GM12878 (cell line): ENCODE measurements at regions of chr2 and their contacts with region 1.

Region 1: DNA sequence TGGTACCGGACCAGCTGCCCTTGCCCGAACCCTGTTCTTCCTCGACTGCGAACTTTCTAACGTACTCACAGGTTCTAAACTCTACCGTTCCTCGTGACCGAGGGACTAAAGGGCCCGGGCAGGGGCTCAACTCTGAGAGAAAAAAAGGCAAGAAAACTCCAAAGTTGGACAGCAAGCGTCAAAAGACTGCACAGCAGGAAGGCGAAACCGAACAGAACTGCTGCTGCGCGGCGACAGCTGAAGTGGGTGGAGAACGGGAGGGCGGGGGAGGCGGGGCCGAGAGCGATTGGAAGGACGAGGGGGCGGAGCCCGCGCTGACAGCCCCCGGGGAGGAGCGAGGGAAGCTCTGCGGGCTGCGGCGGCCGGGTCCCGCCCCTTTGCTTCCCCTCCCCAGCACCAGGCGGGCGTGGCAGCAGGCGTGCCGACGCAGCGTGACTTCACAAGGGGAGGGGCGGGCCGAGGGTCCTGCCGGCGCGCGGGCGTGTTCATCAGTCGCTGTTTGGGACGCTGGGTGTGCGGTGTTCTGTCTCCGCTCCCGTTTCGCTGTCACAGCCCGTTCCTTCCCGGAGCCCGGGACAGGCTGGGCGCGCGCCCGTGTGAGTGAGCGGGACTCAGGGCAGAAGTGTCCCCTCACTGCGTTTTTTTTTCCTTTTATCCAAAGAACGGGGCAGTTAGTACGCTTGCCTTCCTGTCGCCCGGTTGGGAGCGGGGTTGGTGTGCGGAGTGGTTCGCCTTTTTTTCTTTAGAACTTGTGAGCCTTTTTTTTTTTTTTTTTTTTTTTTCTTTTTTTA is at the start of gene NABP1:
- DNase-seq: peak; percentile 84
- ATAC-seq: peak; percentile 81
- H3K4me3 ChIP-seq: peak within 1 kb of the TSS; percentile 87
- H3K27ac ChIP-seq: peak within 1 kb of the TSS; percentile 89
- H3K4me1 ChIP-seq: peaks cover 24% of the 10 kb centered on the region
- H3K27me3 ChIP-seq: no peaks in the 10 kb centered on the region
- CTCF ChIP-seq: no peak
- EP300 ChIP-seq: 0 out of 4 replicates have a peak, but pooled peaks of 1 of the 2 experiments have one; percentile 13
- POLR2A ChIP-seq: peak; percentile 98
- RAD21 ChIP-seq: 0 out of 2 replicates have a peak, but pooled peaks have one; percentile 2
- polyA plus RNA-seq, gene NABP1: 22.9 to 24.1 TPM

Region 2: GRCh38 chr2:191462370-191462769 is 215.5 kb before region 1 on chr2:
- CTCF ChIA-PET with region 1: no interaction called
- POLR2A ChIA-PET with region 1: no interaction called
- RAD21 ChIA-PET with region 1: no interaction called
- SMC1A ChIA-PET with region 1: no interaction called
- in situ Hi-C with region 1: no loop called
- intact Hi-C with region 1: no loop called
- DNase-seq: no peak
- ATAC-seq: no peak
- H3K4me3 ChIP-seq: no peak overlapping the region
- H3K27ac ChIP-seq: no peak overlapping the region
- H3K4me1 ChIP-seq: no peaks in the 10 kb centered on the region
- H3K27me3 ChIP-seq: no peaks in the 10 kb centered on the region
- CTCF ChIP-seq: no peak
- EP300 ChIP-seq: no peak
- POLR2A ChIP-seq: no peak
- RAD21 ChIP-seq: no peak

Region 3: DNA sequence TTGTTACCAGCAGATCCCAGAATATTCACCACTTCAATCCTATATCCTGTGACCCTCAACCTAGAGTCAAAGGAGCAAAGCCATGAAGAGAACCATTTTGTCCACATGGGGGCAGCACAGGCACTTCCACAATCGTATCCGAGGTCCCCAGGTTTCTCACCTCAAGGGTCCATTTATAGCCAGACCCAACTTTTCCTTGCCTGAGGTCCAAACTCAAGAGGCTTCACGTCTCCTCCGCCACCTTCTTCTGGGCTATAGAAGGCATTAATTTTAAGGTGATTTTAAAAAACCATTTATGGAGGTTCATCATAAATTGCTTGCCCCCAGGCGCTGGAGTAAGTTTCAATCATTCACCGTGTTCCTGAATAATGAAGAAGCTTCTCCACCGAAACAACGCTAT is 111.5 kb before region 1 on chr2:
- CTCF ChIA-PET with region 1: interaction called, 7 read pairs
- POLR2A ChIA-PET with region 1: interaction called, 4 read pairs
- RAD21 ChIA-PET with region 1: interaction called, 9 read pairs
- SMC1A ChIA-PET with region 1: interaction called, 12 read pairs
- in situ Hi-C with region 1: no loop called
- intact Hi-C with region 1: no loop called
- DNase-seq: no peak
- ATAC-seq: peak; percentile 91
- H3K4me3 ChIP-seq: no peak overlapping the region
- H3K27ac ChIP-seq: no peak overlapping the region
- H3K4me1 ChIP-seq: peaks cover 8% of the 10 kb centered on the region
- H3K27me3 ChIP-seq: no peaks in the 10 kb centered on the region
- CTCF ChIP-seq: peak; percentile 77 to 81 (median 79)
- EP300 ChIP-seq: no peak
- POLR2A ChIP-seq: no peak
- RAD21 ChIP-seq: peak; percentile 90

Region 4: GRCh38 chr2:191617575-191617974 is 60.3 kb before region 1 on chr2:
- CTCF ChIA-PET with region 1: interaction called, 9 read pairs
- POLR2A ChIA-PET with region 1: interaction called, 102 read pairs
- RAD21 ChIA-PET with region 1: interaction called, 51 read pairs
- SMC1A ChIA-PET with region 1: interaction called, 126 read pairs
- in situ Hi-C with region 1: no loop called
- intact Hi-C with region 1: loop called (anchors 2 kb)
- DNase-seq: peak; percentile 76
- ATAC-seq: peak; percentile 88
- H3K4me3 ChIP-seq: no peak overlapping the region
- H3K27ac ChIP-seq: peak overlapping the region; percentile 26; the same call in 1 of the 2 replicates
- H3K4me1 ChIP-seq: peaks cover 13% of the 10 kb centered on the region
- H3K27me3 ChIP-seq: no peaks in the 10 kb centered on the region
- CTCF ChIP-seq: no peak
- EP300 ChIP-seq: peak; percentile 73 to 77; a peak in 3 of 4 replicates
- POLR2A ChIP-seq: no peak
- RAD21 ChIP-seq: peak; percentile 13; the same call in 1 of the 2 replicates

Region 5: GRCh38 chr2:191637182-191638078 is 40.4 kb before region 1 on chr2:
- CTCF ChIA-PET with region 1: interaction called, 4 read pairs
- POLR2A ChIA-PET with region 1: interaction called, 11 read pairs
- RAD21 ChIA-PET with region 1: interaction called, 15 read pairs
- SMC1A ChIA-PET with region 1: interaction called, 28 read pairs
- in situ Hi-C with region 1: no loop called
- intact Hi-C with region 1: loop called (anchors 5 kb)
- DNase-seq: no peak
- ATAC-seq: peak; percentile 78
- H3K4me3 ChIP-seq: no peak overlapping the region
- H3K27ac ChIP-seq: no peak overlapping the region
- H3K4me1 ChIP-seq: peaks cover 34% of the 10 kb centered on the region
- H3K27me3 ChIP-seq: no peaks in the 10 kb centered on the region
- CTCF ChIP-seq: no peak
- EP300 ChIP-seq: no peak
- POLR2A ChIP-seq: no peak
- RAD21 ChIP-seq: no peak

Region 6: GRCh38 chr2:191656391-191656790 is 21.4 kb before region 1 on chr2:
- CTCF ChIA-PET with region 1: interaction called, 3 read pairs
- POLR2A ChIA-PET with region 1: interaction called, 12 read pairs
- RAD21 ChIA-PET with region 1: interaction called, 16 read pairs
- SMC1A ChIA-PET with region 1: interaction called, 27 read pairs
- in situ Hi-C with region 1: no loop called
- intact Hi-C with region 1: loop called (anchors 1 kb)
- DNase-seq: no peak
- ATAC-seq: no peak
- H3K4me3 ChIP-seq: no peak overlapping the region
- H3K27ac ChIP-seq: no peak overlapping the region
- H3K4me1 ChIP-seq: no peaks in the 10 kb centered on the region
- H3K27me3 ChIP-seq: no peaks in the 10 kb centered on the region
- CTCF ChIP-seq: no peak
- EP300 ChIP-seq: no peak
- POLR2A ChIP-seq: no peak
- RAD21 ChIP-seq: no peak

Region 7: DNA sequence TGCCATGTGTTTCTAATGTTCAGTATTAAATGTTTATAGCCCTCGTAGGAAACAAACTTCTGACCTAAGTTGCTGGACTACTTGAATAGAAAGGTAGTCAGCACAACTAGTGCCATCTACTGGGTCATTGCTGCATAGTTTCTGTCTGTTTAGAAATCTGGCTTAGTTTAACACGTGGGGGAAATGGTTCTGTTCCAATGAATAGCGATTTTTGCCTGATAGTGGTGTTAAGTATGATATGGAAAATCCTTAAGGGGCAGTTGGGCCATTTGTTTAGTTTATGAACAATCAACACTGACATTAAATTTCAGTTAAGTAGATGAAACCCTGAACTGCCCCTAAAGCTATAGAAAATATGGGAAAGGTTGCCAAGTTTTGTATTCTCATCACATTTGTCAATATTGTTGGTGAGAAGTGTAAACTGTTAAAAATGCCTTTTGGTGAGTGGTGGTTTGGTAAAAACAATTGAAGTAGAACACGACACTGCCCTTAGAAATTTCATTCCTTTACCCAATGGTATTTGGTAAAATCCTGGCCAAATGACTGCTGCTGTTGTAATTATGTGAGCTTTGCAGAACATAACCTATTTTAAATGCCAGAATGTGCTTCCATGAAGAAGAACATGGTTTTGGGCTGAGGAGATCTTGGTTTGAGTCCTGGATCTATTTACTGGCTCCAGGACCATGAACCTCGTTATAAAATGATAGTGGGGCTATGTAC is 13.3 kb after region 1 on chr2:
- CTCF ChIA-PET with region 1: interaction called, 4 read pairs
- POLR2A ChIA-PET with region 1: interaction called, 4 read pairs
- RAD21 ChIA-PET with region 1: interaction called, 7 read pairs
- SMC1A ChIA-PET with region 1: interaction called, 17 read pairs
- in situ Hi-C with region 1: no loop called
- intact Hi-C with region 1: no loop called
- DNase-seq: peak; percentile 59
- ATAC-seq: peak; percentile 68
- H3K4me3 ChIP-seq: no peak overlapping the region
- H3K27ac ChIP-seq: no peak overlapping the region
- H3K4me1 ChIP-seq: no peaks in the 10 kb centered on the region
- H3K27me3 ChIP-seq: no peaks in the 10 kb centered on the region
- CTCF ChIP-seq: peak; percentile 73 to 86 (median 77); a peak in 5 of 6 replicates
- EP300 ChIP-seq: no peak
- POLR2A ChIP-seq: no peak; the same call in 1 of the 2 replicates
- RAD21 ChIP-seq: peak; percentile 96